Heart right ventricle (tissue), 16 donors: ENCODE measurements at regions of chr2 and their contacts with region 1.

Region 1: GRCh38 chr2:105744091-105744908 is 412 bp upstream of the NCK2 start:
- DNase-seq: peak; percentile 56 to 79
- ATAC-seq: peak; percentile 72 to 93 (median 90)
- H3K4me3 ChIP-seq: peak overlapping the region; percentile 53 to 85 (median 76)
- H3K27ac ChIP-seq: peak overlapping the region; percentile 89 to 97 (median 94)
- H3K4me1 ChIP-seq: peaks cover 13 to 55% (median 46%) of the 10 kb centered on the region in 9 donors
- H3K27me3 ChIP-seq: no peaks in the 10 kb centered on the region
- CTCF ChIP-seq: no peak

Region 2: GRCh38 chr2:105553538-105554196 is 190.6 kb before region 1 on chr2:
- intact Hi-C with region 1: no loop called
- DNase-seq: no peak
- ATAC-seq: no peak
- H3K4me3 ChIP-seq: no peak overlapping the region
- H3K27ac ChIP-seq: no peak overlapping the region
- H3K4me1 ChIP-seq: peaks cover 0 to 21% (median 9%) of the 10 kb centered on the region in 9 donors
- H3K27me3 ChIP-seq: peaks cover 0 to 17% (median 1%) of the 10 kb centered on the region in 7 donors
- CTCF ChIP-seq: no peak

Region 3: DNA sequence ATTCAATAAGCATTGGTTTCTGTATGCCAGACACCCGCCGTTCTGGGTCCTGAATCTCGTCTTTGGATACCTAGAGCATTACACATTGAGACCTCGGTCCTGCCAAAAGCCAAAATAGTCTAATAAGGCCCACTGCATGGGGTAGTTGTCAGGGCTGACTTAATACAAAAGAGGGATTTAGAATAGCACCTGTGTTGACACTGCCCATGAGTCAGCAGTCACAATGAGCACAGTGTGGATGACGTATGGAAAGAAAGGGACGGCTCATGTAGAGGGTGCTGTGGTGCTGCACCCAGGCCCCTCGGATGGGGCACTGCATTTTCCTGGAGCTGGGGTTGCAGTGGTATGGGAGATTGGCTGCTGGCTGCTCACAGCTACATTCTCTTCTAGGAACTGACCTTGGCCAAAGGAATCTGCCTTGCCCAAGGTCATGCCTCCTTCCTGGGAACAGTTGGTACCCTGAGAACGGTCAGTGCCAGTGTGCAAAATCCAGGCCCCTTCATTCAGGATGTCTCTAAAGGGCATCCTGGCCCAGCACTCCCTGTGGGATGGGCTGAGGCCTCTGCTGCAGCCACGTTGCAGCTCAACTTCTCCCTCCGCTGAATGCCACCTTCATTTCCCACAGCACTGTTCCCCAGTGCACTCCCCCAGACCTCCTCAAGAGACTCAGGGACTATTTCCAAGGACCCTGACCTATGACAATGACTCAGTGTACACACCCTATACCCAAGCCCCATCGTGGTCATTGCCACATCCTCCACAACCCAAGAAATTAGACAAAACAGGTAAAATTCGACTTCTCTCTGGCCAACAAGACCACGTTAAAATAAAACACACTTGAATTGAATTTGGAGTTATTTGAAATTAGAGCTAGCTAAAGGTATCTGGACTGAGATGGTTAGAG is 126.3 kb before region 1 on chr2:
- intact Hi-C with region 1: loop called in 1 of 10 experiments (anchors 10 kb)
- DNase-seq: no peak
- ATAC-seq: peak in 6 of 8 donors; percentile 54 to 85 (median 80)
- H3K4me3 ChIP-seq: no peak overlapping the region
- H3K27ac ChIP-seq: no peak overlapping the region
- H3K4me1 ChIP-seq: no peaks in the 10 kb centered on the region
- H3K27me3 ChIP-seq: no peaks in the 10 kb centered on the region
- CTCF ChIP-seq: peak in 1 of 9 donors; percentile 7

Region 4: GRCh38 chr2:105888625-105889400 is 144.5 kb after region 1 on chr2:
- intact Hi-C with region 1: loop called in 2 of 10 experiments (anchors 10 kb)
- DNase-seq: peak in 1 of 2 donors; percentile 58
- ATAC-seq: peak in 7 of 8 donors; percentile 10 to 59 (median 37)
- H3K4me3 ChIP-seq: no peak overlapping the region
- H3K27ac ChIP-seq: peak overlapping the region in 4 of 10 donors; percentile 2 to 75 (median 6)
- H3K4me1 ChIP-seq: peaks cover 8 to 71% (median 50%) of the 10 kb centered on the region in 9 donors
- H3K27me3 ChIP-seq: no peaks in the 10 kb centered on the region
- CTCF ChIP-seq: peak in 1 of 9 donors; percentile 28

Region 5: DNA sequence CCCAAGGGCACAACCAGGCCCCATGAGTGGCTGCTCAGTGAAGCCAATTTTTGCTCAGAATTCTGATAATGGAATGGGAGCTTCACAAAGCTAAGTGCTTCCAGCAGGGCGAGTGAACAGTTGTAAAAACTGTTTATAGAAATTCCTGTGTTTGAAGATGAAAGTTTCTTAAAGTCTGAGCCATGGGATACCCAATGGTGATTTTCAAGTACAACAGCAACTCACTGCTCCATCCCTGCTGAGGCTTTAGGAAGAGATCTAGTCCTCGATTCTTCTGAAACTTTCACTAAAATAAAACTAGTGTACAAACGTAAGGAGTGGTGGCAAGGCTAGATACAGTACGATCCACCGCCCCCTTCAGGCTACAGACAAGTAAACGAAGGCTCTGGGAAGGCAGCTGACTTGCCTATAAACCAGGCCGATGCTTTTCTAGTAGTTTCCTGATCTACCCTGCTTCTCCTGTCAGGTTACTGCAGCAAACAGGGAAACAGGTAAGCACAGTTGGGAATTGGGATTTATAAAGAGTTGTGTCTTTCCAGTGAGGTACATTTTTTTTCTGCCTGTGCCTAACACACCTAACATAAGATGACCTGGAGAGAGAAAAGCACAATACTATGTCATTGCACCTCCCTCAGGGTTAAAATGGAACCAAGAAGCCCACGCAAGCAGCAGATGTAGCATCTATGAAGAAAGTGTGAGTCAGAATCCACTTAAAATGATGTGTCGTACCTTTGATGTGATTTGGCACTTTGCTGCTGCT is 341.1 kb after region 1 on chr2:
- intact Hi-C with region 1: loop called in 2 of 10 experiments (anchors 10 kb)
- DNase-seq: peak in 1 of 2 donors; percentile 61
- ATAC-seq: peak in 7 of 8 donors; percentile 31 to 89 (median 76)
- H3K4me3 ChIP-seq: no peak overlapping the region
- H3K27ac ChIP-seq: peak overlapping the region in 1 of 10 donors; percentile 16
- H3K4me1 ChIP-seq: peaks cover 0 to 5% (median 0%) of the 10 kb centered on the region in 9 donors
- H3K27me3 ChIP-seq: no peaks in the 10 kb centered on the region
- CTCF ChIP-seq: peak in 8 of 9 donors; percentile 26 to 71 (median 54)

Region 6: DNA sequence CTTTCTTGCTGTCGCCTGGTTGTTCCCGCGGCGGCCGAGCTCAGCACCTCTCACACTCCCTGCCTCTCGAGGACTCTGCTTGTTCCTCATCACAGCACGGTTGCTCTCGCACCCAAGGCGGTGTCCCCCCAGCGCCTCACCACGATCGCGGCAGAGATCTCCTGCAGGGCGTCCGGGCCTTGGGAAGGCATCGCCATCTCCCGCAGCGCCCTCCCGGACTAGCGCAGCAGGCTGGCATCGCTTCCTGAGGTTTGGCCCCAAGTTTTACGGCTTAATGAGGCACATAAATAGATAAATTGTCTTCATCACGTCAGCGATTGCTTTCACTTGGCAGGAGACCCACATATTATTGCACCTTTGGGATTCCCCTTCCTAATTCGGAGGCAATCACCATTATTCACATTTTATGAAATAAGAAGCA is 598.5 kb after region 1 on chr2:
- intact Hi-C with region 1: no loop called
- DNase-seq: no peak
- ATAC-seq: no peak
- H3K4me3 ChIP-seq: no peak overlapping the region
- H3K27ac ChIP-seq: no peak overlapping the region
- H3K4me1 ChIP-seq: no peaks in the 10 kb centered on the region
- H3K27me3 ChIP-seq: no peaks in the 10 kb centered on the region
- CTCF ChIP-seq: no peak